ENCODE measurements at regions of chr10 and their contacts with region 1.

Region 1: GRCh38 chr10:114095559-114096337 is 52.1 kb downstream of the ADRB1 start:
- DNase-seq: no peak
- ATAC-seq: no peak
- H3K4me3 ChIP-seq: no peak overlapping the region
- H3K27ac ChIP-seq: no peak overlapping the region
- H3K4me1 ChIP-seq: peaks cover 0 to 30% of the 10 kb centered on the region in 2 donors
- H3K27me3 ChIP-seq: peaks cover 0 to 11% of the 10 kb centered on the region in 2 donors
- CTCF ChIP-seq: no peak

Region 2: DNA sequence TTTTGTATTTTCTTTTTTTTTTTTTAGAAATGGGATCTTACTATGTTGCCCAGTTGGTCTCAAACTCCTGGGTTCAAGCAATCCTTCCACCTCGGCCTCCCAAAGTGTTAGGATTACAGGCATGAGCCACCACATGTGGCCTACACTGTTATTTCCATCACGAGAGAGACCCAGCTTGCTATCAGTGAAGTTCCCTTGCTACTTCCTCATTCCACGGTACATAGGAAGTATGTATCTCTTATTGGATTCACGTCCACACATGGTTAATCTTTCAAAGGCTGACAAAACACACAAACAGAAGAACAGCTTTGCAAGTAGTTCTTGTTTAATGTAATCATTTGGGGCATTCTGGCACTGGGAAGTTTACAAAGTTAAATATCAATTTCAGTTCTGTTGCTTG is 292.8 kb before region 1 on chr10:
- intact Hi-C with region 1: loop called in 1 of 2 experiments (anchors 5 kb)
- DNase-seq: no peak
- ATAC-seq: no peak
- H3K4me3 ChIP-seq: no peak overlapping the region
- H3K27ac ChIP-seq: no peak overlapping the region
- H3K4me1 ChIP-seq: peaks cover 0 to 5% of the 10 kb centered on the region in 2 donors
- H3K27me3 ChIP-seq: no peaks in the 10 kb centered on the region
- CTCF ChIP-seq: no peak